Activated CD4-positive, alpha-beta memory T cell treated with anti-CD3 and anti-CD28 coated beads for 36 hours (primary cell): ENCODE measurements at regions of chr1 and their contacts with region 1.

Region 1: GRCh38 chr1:42913426-42914091 is 45.1 kb downstream of the SLC2A1 start:
- DNase-seq: peak; percentile 52
- H3K4me3 Mint-ChIP-seq: no peak overlapping the region
- H3K27ac Mint-ChIP-seq: no peak overlapping the region
- H3K4me1 Mint-ChIP-seq: peaks cover 6% of the 10 kb centered on the region
- H3K27me3 Mint-ChIP-seq: peaks cover 6% of the 10 kb centered on the region

Region 2: GRCh38 chr1:42777852-42778251 is 135.7 kb before region 1 on chr1:
- CTCF ChIA-PET with region 1: interaction called, 27 read pairs
- POLR2A ChIA-PET with region 1: no interaction called
- intact Hi-C with region 1: no loop called
- DNase-seq: peak; percentile 41
- H3K4me3 Mint-ChIP-seq: no peak overlapping the region
- H3K27ac Mint-ChIP-seq: no peak overlapping the region
- H3K4me1 Mint-ChIP-seq: peaks cover 20% of the 10 kb centered on the region
- H3K27me3 Mint-ChIP-seq: no peaks in the 10 kb centered on the region

Region 3: GRCh38 chr1:43065191-43065590 is 151.6 kb after region 1 on chr1:
- CTCF ChIA-PET with region 1: interaction called, 536 read pairs
- POLR2A ChIA-PET with region 1: no interaction called
- intact Hi-C with region 1: no loop called
- DNase-seq: no peak
- H3K4me3 Mint-ChIP-seq: no peak overlapping the region
- H3K27ac Mint-ChIP-seq: no peak overlapping the region
- H3K4me1 Mint-ChIP-seq: peaks cover 7% of the 10 kb centered on the region
- H3K27me3 Mint-ChIP-seq: peaks cover 2% of the 10 kb centered on the region

Region 4: DNA sequence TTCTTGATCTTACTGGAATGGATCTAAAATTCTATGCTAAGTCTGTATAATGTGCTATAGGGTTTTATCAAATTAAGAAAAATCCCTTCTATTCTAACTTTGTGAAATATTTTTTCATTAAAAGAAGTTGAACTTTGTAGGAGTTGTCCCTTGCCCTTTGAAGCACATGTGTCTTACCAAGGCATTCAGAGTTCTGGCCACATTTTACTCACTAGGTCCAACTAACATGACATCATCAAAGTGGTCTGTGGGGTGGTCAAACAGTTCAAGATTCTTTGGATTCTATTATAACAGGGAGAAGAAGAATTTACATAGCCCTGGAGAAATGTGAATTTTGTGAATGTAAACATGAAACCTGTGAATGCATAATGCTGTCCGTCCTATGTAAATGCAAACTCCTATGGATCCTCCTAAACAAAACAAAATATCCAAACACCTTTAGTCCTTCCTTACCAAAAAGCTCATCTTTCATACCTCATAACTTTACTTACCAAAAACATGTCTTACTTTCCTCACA is 169.9 kb after region 1 on chr1:
- CTCF ChIA-PET with region 1: interaction called, 15 read pairs
- POLR2A ChIA-PET with region 1: no interaction called
- intact Hi-C with region 1: no loop called
- DNase-seq: no peak
- H3K4me3 Mint-ChIP-seq: no peak overlapping the region
- H3K27ac Mint-ChIP-seq: no peak overlapping the region
- H3K4me1 Mint-ChIP-seq: no peaks in the 10 kb centered on the region
- H3K27me3 Mint-ChIP-seq: peaks cover 7% of the 10 kb centered on the region